ENCODE measurements at regions of chr1 and their contacts with region 1.

Region 1: DNA sequence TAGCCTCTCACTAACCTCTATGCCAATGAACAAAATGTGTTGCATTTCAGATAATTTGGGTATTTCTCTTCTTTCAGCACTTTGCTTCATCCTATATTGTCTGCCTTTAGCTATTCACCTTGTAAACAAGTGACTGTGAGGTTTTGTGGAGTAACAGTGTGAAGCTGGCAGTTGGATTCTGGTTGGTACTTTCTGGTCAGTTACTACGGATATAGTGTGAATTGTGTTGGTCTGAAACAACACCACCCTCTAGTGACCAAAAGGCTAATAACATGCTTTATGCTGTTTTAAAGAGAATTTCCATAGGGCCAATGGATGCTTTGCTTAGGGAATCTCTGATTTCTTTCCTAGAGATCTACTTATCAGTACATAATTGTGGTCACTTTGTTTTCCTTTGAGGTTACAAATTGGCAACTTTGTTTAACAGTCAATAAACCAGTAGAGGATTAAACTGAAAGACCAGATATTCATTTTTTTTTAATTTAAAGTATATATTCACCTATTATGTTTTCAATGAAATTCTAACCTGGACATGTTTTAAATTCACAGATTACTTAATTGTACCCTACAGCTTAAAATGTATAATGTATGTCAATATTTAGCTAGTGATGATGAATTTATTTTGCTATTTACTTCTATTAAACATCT is 2.5 kb upstream of the PTGER3 start:
- DNase-seq: peak; percentile 6
- H3K4me3 Mint-ChIP-seq: no peak overlapping the region
- H3K27ac Mint-ChIP-seq: no peak overlapping the region
- H3K4me1 Mint-ChIP-seq: peaks cover 16% of the 10 kb centered on the region
- H3K27me3 Mint-ChIP-seq: peaks cover 33% of the 10 kb centered on the region

Region 2: GRCh38 chr1:70134148-70134547 is 915.9 kb before region 1 on chr1:
- CTCF ChIA-PET with region 1: no interaction called
- intact Hi-C with region 1: loop called (anchors 5 kb)
- DNase-seq: no peak
- H3K4me3 Mint-ChIP-seq: no peak overlapping the region
- H3K27ac Mint-ChIP-seq: no peak overlapping the region
- H3K4me1 Mint-ChIP-seq: no peaks in the 10 kb centered on the region
- H3K27me3 Mint-ChIP-seq: peaks cover 4% of the 10 kb centered on the region

Region 3: GRCh38 chr1:70528590-70529333 is 521.3 kb before region 1 on chr1:
- CTCF ChIA-PET with region 1: interaction called, 12 read pairs
- intact Hi-C with region 1: loop called (anchors 1 kb)
- DNase-seq: peak; percentile 26
- H3K4me3 Mint-ChIP-seq: no peak overlapping the region
- H3K27ac Mint-ChIP-seq: no peak overlapping the region
- H3K4me1 Mint-ChIP-seq: peaks cover 4% of the 10 kb centered on the region
- H3K27me3 Mint-ChIP-seq: peaks cover 5% of the 10 kb centered on the region

Region 4: DNA sequence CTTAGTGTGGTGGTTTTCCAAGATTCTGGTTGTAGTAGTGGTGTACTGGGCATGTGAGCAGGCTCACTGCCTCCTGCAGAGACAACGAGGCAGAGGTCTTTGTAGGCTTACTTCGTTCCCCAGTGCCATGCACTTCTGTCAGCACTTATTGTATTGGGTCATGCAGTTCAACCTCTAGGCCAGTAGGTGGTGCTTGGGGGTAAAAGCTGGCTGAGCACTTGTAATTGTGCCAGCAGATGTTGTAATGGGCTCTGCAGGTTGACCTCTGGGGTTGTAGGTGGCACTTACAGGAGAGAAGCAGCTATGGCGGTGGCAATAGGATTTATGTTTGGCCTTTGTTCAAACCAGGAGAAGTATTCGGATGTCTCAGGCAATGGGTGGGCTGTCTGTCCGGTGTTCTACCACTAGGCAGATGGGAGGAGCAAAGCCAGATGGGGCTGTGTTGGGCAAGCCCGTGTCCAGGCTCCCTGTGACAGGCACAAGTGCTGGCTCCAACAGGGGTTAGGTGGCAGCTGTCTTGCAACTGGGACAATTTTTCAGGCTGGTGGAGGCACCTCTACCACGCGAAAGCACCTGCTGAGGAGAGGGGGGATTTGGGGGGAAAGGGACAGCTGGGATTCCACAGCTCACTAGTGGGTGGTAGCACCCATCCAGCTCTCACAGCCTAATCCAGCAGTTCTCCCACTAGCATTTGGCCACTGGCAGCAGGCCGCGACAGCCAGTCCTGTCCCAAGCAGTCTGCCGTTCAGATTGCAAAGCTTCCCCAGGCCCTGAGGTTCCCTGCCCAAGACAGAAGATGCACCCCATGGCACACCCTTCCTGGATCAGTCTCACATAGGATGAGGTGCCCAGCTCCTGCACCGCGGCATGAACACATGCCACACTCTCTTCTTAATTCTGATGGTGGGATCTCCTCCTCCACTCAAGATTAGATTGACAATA is 364.5 kb before region 1 on chr1:
- CTCF ChIA-PET with region 1: interaction called, 8 read pairs
- intact Hi-C with region 1: loop called (anchors 1 kb)
- DNase-seq: peak; percentile 57
- H3K4me3 Mint-ChIP-seq: no peak overlapping the region
- H3K27ac Mint-ChIP-seq: no peak overlapping the region
- H3K4me1 Mint-ChIP-seq: no peaks in the 10 kb centered on the region
- H3K27me3 Mint-ChIP-seq: peaks cover 11% of the 10 kb centered on the region

Region 5: DNA sequence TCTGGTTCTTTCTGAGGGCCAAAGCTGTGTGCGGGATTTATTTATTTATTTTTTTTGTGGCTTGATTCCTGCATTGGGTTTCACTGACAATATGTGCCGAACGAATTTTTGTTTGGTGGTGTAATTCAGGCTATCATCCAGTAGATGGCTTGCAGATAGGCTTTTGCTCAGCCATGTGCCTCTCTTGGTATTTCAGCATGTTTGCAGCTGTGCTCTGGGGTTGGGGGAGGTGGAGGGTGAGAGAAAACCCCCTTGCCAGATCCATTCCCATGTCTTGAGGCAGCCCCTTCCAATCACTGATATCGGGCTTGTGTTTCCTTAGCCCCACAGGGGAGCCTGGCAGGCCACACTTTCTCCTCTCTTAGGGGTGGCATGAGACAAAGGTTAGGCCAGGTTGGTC is 304.9 kb before region 1 on chr1:
- CTCF ChIA-PET with region 1: no interaction called
- intact Hi-C with region 1: no loop called
- DNase-seq: no peak
- H3K4me3 Mint-ChIP-seq: no peak overlapping the region
- H3K27ac Mint-ChIP-seq: no peak overlapping the region
- H3K4me1 Mint-ChIP-seq: no peaks in the 10 kb centered on the region
- H3K27me3 Mint-ChIP-seq: no peaks in the 10 kb centered on the region

Region 6: GRCh38 chr1:70874111-70874510 is 176.0 kb before region 1 on chr1:
- CTCF ChIA-PET with region 1: no interaction called
- intact Hi-C with region 1: loop called (anchors 10 kb)
- DNase-seq: no peak
- H3K4me3 Mint-ChIP-seq: no peak overlapping the region
- H3K27ac Mint-ChIP-seq: no peak overlapping the region
- H3K4me1 Mint-ChIP-seq: no peaks in the 10 kb centered on the region
- H3K27me3 Mint-ChIP-seq: no peaks in the 10 kb centered on the region

Region 7: GRCh38 chr1:71200503-71200902 is 150.4 kb after region 1 on chr1:
- CTCF ChIA-PET with region 1: no interaction called
- intact Hi-C with region 1: no loop called
- DNase-seq: no peak
- H3K4me3 Mint-ChIP-seq: no peak overlapping the region
- H3K27ac Mint-ChIP-seq: no peak overlapping the region
- H3K4me1 Mint-ChIP-seq: no peaks in the 10 kb centered on the region
- H3K27me3 Mint-ChIP-seq: no peaks in the 10 kb centered on the region

Measured in activated naive CD4-positive, alpha-beta T cell treated with anti-CD3 and anti-CD28 coated beads for 36 hours (primary cell).